ENCODE measurements at regions of chr19 and their contacts with region 1.

Region 1: DNA sequence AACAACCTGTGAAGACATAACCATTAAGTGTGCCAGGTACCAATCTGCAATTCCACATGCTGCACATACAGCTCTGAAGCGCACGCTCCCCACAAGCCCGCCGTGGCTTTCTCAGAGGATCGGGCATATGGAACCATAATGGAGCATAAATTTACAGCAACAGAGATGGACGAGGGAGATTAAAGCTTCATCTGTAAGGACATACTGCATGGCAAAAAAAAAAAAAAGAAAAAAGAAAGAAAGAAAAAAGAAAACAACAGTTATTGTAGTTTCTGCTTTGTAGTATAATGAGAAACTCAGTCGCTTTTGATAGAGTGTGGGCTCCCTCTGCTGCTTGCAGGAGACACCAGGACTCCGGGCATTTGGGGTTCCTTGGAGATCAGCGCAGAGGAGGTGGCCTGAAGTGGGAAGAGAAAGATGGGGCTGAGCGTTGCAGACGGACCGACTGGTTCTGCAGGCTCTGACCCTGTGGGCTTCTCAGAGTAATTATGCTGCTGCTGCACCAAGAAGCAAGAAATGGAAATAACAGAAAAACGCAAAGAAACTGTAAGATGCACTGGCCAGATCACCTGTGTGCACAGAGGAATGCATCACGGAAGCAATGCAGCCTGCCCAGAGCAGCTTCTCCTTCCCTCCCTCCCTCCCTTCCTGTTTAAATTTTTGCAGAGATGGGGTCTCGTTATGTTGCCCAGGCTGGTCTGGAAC is 10.8 kb upstream of the PDCD5 start:
- DNase-seq: peak; percentile 36 to 92 (median 68)

Region 2: GRCh38 chr19:30682999-30683536 is 1887.2 kb before region 1 on chr19:
- intact Hi-C with region 1: loop called (anchors 10 kb)
- DNase-seq: peak; percentile 58 to 97 (median 82)

Region 3: DNA sequence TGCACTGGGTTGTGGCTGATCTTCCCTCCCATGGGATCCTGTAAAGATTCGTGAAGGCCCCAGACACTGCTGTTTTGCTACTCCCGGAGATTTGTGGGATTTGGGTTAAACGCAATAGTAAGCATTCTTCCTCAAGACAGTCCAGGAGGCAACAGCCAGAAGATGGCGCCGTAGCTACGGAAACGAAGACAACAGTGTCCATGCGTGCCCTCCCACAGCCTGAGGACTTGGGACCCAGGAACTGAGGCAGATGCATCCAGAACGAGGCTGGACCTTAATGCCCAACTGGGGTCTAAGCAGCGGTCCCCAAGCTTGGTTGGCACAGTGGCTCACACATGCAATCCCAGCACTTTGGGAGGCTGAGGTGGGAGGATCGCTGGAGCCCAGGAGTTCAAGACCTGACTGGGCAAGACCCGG is 282.4 kb before region 1 on chr19:
- intact Hi-C with region 1: loop called (anchors 5 kb)
- DNase-seq: peak in 7 of 10 donors; percentile 43 to 93 (median 72)

Region 4: GRCh38 chr19:32339988-32340874 is 230.0 kb before region 1 on chr19:
- intact Hi-C with region 1: loop called (anchors 2 kb)
- DNase-seq: peak; percentile 43 to 93 (median 72)

Region 5: GRCh38 chr19:32405431-32406161 is 164.6 kb before region 1 on chr19 and contains the start of gene DPY19L3:
- intact Hi-C with region 1: loop called (anchors 10 kb)
- DNase-seq: peak; percentile 95 to 99 (median 97)

Measured in posterior cingulate gyrus (tissue), 11 donors.